CD8-positive, alpha-beta T cell (primary cell): ENCODE measurements at regions of chr6 and their contacts with region 1.

Region 1: GRCh38 chr6:73610444-73611275 is 43.1 kb downstream of the SLC17A5 start:
- DNase-seq: peak in 2 of 9 experiments; percentile 62 to 74
- ATAC-seq: peak; percentile 77
- H3K4me3 ChIP-seq: no peak overlapping the region
- H3K4me3 Mint-ChIP-seq: no peak overlapping the region
- H3K27ac ChIP-seq: no peak overlapping the region
- H3K27ac Mint-ChIP-seq: no peak overlapping the region
- H3K4me1 ChIP-seq: no peaks in the 10 kb centered on the region
- H3K4me1 Mint-ChIP-seq: peaks cover 5% of the 10 kb centered on the region
- H3K27me3 ChIP-seq: no peaks in the 10 kb centered on the region
- H3K27me3 Mint-ChIP-seq: no peaks in the 10 kb centered on the region
- CTCF ChIP-seq: peak; percentile 80

Region 2: DNA sequence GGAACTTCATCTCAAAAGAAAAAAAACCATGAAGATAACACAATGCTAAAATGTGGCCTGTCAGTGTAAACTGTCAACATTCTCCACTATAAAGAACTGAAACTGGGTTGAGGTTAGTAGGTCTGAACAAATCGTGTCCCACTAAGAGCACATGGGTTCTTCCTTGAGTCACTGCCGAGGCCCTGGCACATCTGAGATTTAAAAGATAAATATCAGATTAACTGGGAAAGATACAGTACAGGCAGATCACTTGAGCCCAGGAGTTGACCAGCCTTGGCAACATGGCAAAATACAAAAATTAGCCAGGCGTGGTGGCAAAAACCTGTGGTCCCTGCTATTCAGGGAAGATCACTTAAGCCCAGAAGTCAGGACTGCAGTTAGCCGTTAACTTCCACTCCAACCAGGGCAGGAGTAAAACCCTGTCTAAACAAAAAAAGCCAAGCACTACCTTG is 95.4 kb before region 1 on chr6:
- CTCF ChIA-PET with region 1: interaction called, 288 read pairs
- POLR2A ChIA-PET with region 1: interaction called, 57 read pairs
- intact Hi-C with region 1: loop called (anchors 1 kb)
- DNase-seq: peak in 3 of 9 experiments; percentile 12 to 48 (median 32)
- ATAC-seq: no peak
- H3K4me3 ChIP-seq: no peak overlapping the region
- H3K4me3 Mint-ChIP-seq: peak overlapping the region; percentile 37
- H3K27ac ChIP-seq: peak overlapping the region in 1 of 2 experiments; percentile 55
- H3K27ac Mint-ChIP-seq: peak overlapping the region; percentile 68
- H3K4me1 ChIP-seq: peaks cover 35% of the 10 kb centered on the region
- H3K4me1 Mint-ChIP-seq: peaks cover 50% of the 10 kb centered on the region
- H3K27me3 ChIP-seq: no peaks in the 10 kb centered on the region
- H3K27me3 Mint-ChIP-seq: no peaks in the 10 kb centered on the region
- CTCF ChIP-seq: no peak

Region 3: DNA sequence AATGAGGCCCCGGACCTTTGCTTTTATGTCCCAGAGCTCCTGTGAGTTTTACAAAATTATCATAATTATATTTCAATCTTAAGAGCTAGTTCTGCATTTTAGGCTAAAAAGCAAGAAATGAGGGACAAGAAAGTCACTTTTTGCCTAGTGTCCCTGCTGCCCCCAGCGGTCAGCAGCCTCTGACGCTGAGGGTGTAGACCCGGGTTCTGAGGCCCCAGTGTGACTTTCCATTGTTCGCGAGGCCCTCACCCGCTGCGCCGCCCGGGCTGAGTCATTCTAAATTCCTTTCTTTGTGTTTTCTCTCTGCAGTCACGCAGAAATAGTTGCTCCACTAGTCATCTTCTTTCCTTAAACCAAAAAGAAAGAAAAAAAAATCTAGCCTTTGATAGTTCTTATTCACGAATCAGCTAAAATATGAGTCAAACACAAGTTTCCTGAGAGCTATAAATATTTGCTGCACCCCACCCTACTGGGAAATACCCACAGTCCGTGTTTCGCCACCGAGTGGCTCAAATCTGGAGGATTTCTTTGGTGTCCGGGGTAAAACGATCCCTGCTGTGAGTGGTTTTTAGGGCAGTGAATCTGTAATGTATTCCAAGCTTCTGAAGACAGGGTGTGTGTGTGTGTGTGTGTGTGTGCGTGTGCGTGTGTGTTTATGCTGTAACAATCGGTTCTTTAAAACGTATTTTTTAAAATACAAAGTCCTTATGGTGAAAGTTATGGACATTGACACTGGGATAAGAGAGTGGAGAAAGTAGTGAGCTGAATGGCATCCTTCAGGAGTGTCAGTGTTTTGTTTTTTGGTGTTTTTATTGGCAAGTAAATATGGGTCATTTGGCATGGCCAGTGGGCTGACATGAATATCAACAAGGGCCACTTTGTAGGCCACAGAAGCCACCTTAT is 30.2 kb before region 1 on chr6:
- CTCF ChIA-PET with region 1: interaction called, 10 read pairs
- POLR2A ChIA-PET with region 1: no interaction called
- intact Hi-C with region 1: no loop called
- DNase-seq: peak; percentile 3 to 78 (median 64)
- ATAC-seq: peak; percentile 76
- H3K4me3 ChIP-seq: peak overlapping the region in 1 of 2 experiments; percentile 25
- H3K4me3 Mint-ChIP-seq: peak overlapping the region; percentile 69
- H3K27ac ChIP-seq: peak overlapping the region; percentile 17 to 68
- H3K27ac Mint-ChIP-seq: peak overlapping the region; percentile 88
- H3K4me1 ChIP-seq: peaks cover 25% of the 10 kb centered on the region
- H3K4me1 Mint-ChIP-seq: peaks cover 22% of the 10 kb centered on the region
- H3K27me3 ChIP-seq: no peaks in the 10 kb centered on the region
- H3K27me3 Mint-ChIP-seq: no peaks in the 10 kb centered on the region
- CTCF ChIP-seq: no peak

Region 4: DNA sequence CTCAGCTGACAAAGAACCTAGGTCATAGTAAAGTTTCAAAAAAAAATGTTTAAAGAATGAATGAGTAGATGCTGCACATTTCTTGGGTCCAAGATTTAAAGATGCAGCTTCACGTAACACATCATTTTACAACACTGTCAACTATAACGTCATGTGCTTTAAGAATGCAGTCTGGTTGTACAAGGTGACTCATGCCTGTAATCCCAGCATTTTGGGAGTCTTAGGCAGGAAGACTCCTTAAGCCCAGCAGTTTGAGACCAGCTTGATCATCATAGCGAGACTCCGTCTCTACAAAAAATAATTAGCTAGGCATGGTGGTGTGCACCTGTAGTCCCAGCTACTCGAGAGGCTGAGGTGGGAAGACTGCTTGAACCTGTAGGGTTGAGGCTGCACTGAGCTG is 21.2 kb after region 1 on chr6:
- CTCF ChIA-PET with region 1: interaction called, 10 read pairs
- POLR2A ChIA-PET with region 1: no interaction called
- intact Hi-C with region 1: no loop called
- DNase-seq: no peak
- ATAC-seq: no peak
- H3K4me3 ChIP-seq: no peak overlapping the region
- H3K4me3 Mint-ChIP-seq: no peak overlapping the region
- H3K27ac ChIP-seq: no peak overlapping the region
- H3K27ac Mint-ChIP-seq: no peak overlapping the region
- H3K4me1 ChIP-seq: no peaks in the 10 kb centered on the region
- H3K4me1 Mint-ChIP-seq: no peaks in the 10 kb centered on the region
- H3K27me3 ChIP-seq: no peaks in the 10 kb centered on the region
- H3K27me3 Mint-ChIP-seq: no peaks in the 10 kb centered on the region
- CTCF ChIP-seq: no peak